HCT116 (cell line): ENCODE measurements at regions of chr9 and their contacts with region 1.

Region 1: GRCh38 chr9:89597711-89598625 is 6.8 kb upstream of the GADD45G start:
- DNase-seq: no peak
- ATAC-seq: peak; percentile 59
- H3K4me3 ChIP-seq: no peak overlapping the region
- H3K27ac ChIP-seq: no peak overlapping the region
- H3K4me1 ChIP-seq: peaks cover 7 to 8% of the 10 kb centered on the region in 2 experiments; a peak in 2 of 4 replicates
- H3K27me3 ChIP-seq: peaks cover 28% of the 10 kb centered on the region
- CTCF ChIP-seq: peak; percentile 73 to 93 (median 78)
- POLR2A ChIP-seq: no peak
- RAD21 ChIP-seq: peak; percentile 92

Region 2: GRCh38 chr9:89576404-89576839 is 21.5 kb before region 1 on chr9:
- CTCF ChIA-PET with region 1: interaction called, 15 read pairs
- POLR2A ChIA-PET with region 1: no interaction called
- RAD21 ChIA-PET with region 1: no interaction called
- intact Hi-C with region 1: no loop called
- DNase-seq: peak; percentile 18
- ATAC-seq: no peak
- H3K4me3 ChIP-seq: no peak overlapping the region
- H3K27ac ChIP-seq: no peak overlapping the region
- H3K4me1 ChIP-seq: no peaks in the 10 kb centered on the region
- H3K27me3 ChIP-seq: peaks cover 43% of the 10 kb centered on the region
- CTCF ChIP-seq: peak; percentile 34 to 64 (median 50); a peak in 4 of 6 replicates
- POLR2A ChIP-seq: no peak
- RAD21 ChIP-seq: peak; percentile 62

Region 3: GRCh38 chr9:90095682-90096081 is 497.7 kb after region 1 on chr9:
- CTCF ChIA-PET with region 1: interaction called, 297 read pairs
- POLR2A ChIA-PET with region 1: interaction called, 10 read pairs
- RAD21 ChIA-PET with region 1: interaction called, 6 to 10 read pairs
- intact Hi-C with region 1: no loop called
- DNase-seq: no peak
- ATAC-seq: no peak
- H3K4me3 ChIP-seq: no peak overlapping the region
- H3K27ac ChIP-seq: no peak overlapping the region
- H3K4me1 ChIP-seq: no peaks in the 10 kb centered on the region
- H3K27me3 ChIP-seq: peaks cover 40% of the 10 kb centered on the region
- CTCF ChIP-seq: no peak
- POLR2A ChIP-seq: no peak
- RAD21 ChIP-seq: no peak

Region 4: DNA sequence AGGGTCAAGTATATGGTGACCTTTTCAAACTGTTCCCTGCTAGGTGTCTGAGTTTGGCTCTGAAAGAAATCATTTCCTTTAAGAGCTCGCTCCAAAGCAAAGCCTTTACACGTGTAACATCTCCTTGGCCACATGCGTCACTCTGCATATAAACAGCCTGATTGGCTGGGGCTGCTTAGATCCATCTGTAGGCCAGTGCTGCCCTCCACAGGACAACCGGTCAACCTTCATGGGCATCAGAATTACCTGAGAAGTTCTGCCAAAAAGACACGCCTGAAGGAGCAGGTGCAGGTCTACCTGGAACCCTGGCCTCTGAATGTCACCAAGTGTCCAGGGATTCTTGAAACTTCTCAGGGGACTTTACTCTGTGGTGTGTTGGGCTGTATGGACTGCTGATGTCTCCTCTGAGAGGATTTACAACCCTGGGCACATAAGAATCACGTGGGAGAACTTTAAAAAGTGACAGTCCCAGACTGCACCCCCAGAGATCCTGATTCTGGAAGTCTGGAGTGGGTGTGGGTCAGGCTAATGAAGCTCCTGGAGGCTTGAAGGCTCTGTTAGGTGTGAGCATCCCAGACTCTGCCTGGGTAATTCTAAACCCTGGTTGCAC is 504.4 kb after region 1 on chr9:
- CTCF ChIA-PET with region 1: interaction called, 297 read pairs
- POLR2A ChIA-PET with region 1: interaction called, 10 read pairs
- RAD21 ChIA-PET with region 1: interaction called, 9 to 10 read pairs
- intact Hi-C with region 1: loop called (anchors 1 kb)
- DNase-seq: peak; percentile 90
- ATAC-seq: peak; percentile 99
- H3K4me3 ChIP-seq: no peak overlapping the region
- H3K27ac ChIP-seq: no peak overlapping the region
- H3K4me1 ChIP-seq: peaks cover 6 to 9% of the 10 kb centered on the region in 2 experiments; a peak in 2 of 4 replicates
- H3K27me3 ChIP-seq: 0 out of 2 replicates have a peak, but pooled peaks cover 10% of the 10 kb centered on the region
- CTCF ChIP-seq: peak; percentile 78 to 85 (median 80)
- POLR2A ChIP-seq: no peak
- RAD21 ChIP-seq: peak; percentile 92

Region 5: DNA sequence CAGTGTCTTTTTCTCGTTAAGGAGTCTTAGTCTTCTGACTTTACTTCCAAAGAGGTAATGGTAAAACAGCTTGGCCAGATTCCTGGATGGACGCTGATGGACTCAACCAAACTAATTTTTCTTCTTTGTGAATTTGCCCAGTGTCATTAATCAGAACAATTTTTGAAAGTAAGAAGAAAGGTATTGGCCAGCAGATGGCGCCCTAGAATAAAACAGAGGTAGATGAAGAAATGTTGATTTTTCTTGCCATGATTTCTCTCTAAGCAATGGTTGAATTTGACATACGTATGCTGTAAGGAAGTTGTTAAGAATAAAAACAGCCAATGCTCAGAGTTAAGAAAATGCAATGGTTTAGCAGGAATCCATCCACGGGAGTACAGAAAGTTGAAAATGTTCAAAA is 544.6 kb after region 1 on chr9:
- CTCF ChIA-PET with region 1: interaction called, 17 read pairs
- POLR2A ChIA-PET with region 1: no interaction called
- RAD21 ChIA-PET with region 1: no interaction called
- intact Hi-C with region 1: no loop called
- DNase-seq: peak; percentile 21
- ATAC-seq: peak; percentile 47; the same call in 1 of the 2 replicates
- H3K4me3 ChIP-seq: no peak overlapping the region
- H3K27ac ChIP-seq: no peak overlapping the region
- H3K4me1 ChIP-seq: no peaks in the 10 kb centered on the region
- H3K27me3 ChIP-seq: peaks cover 20% of the 10 kb centered on the region
- CTCF ChIP-seq: peak; percentile 48 to 74 (median 48)
- POLR2A ChIP-seq: no peak
- RAD21 ChIP-seq: peak; percentile 66

Region 6: GRCh38 chr9:90219548-90220118 is 621.7 kb after region 1 on chr9:
- CTCF ChIA-PET with region 1: no interaction called
- POLR2A ChIA-PET with region 1: no interaction called
- RAD21 ChIA-PET with region 1: no interaction called
- intact Hi-C with region 1: loop called (anchors 1 kb)
- DNase-seq: no peak
- ATAC-seq: peak; percentile 93
- H3K4me3 ChIP-seq: no peak overlapping the region
- H3K27ac ChIP-seq: no peak overlapping the region
- H3K4me1 ChIP-seq: no peaks in the 10 kb centered on the region
- H3K27me3 ChIP-seq: no peaks in the 10 kb centered on the region
- CTCF ChIP-seq: peak; percentile 34 to 67 (median 60); a peak in 5 of 6 replicates
- POLR2A ChIP-seq: no peak
- RAD21 ChIP-seq: peak; percentile 59

Region 7: DNA sequence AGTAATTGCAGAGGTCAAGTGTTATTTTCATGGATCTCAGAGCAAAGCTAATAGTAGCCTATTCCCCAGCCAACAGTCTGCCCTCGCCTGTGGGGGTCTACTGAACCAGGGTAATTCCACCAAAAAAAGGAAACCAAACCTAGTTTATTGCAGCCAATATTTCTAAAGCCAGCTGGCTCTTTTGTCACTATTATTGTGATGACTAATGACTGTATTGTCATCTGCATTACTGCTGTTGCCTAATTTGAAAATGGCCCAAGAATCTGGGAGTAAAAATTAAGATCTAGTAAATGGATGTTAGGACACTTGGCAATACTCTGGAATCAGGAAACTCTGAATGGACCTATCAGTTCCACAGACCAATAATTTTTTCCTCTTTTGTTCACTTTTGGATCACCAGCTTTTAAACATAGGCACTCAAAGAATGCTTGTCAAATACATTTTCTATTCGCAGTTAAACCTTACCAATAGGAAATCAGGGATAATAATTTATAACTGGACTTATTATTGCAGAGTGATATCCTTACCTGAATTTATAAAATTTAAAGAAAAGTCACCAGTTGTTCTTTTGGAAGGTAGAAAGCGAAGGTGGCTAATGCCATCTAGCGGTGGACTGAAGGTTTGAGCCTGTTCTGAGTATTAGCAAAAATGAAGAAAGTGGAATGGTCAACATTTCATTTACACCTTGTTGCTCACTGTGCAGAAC is 1272.8 kb after region 1 on chr9:
- CTCF ChIA-PET with region 1: interaction called, 4 read pairs
- POLR2A ChIA-PET with region 1: no interaction called
- RAD21 ChIA-PET with region 1: no interaction called
- intact Hi-C with region 1: loop called (anchors 2 kb)
- DNase-seq: peak; percentile 27
- ATAC-seq: peak; percentile 69
- H3K4me3 ChIP-seq: no peak overlapping the region
- H3K27ac ChIP-seq: no peak overlapping the region
- H3K4me1 ChIP-seq: no peaks in the 10 kb centered on the region
- H3K27me3 ChIP-seq: no peaks in the 10 kb centered on the region
- CTCF ChIP-seq: peak; percentile 72 to 91 (median 84); a peak in 5 of 6 replicates
- POLR2A ChIP-seq: no peak
- RAD21 ChIP-seq: peak; percentile 85